Thyroid gland (tissue), 4 donors: ENCODE measurements at regions of chr3 and their contacts with region 1.

Region 1: DNA sequence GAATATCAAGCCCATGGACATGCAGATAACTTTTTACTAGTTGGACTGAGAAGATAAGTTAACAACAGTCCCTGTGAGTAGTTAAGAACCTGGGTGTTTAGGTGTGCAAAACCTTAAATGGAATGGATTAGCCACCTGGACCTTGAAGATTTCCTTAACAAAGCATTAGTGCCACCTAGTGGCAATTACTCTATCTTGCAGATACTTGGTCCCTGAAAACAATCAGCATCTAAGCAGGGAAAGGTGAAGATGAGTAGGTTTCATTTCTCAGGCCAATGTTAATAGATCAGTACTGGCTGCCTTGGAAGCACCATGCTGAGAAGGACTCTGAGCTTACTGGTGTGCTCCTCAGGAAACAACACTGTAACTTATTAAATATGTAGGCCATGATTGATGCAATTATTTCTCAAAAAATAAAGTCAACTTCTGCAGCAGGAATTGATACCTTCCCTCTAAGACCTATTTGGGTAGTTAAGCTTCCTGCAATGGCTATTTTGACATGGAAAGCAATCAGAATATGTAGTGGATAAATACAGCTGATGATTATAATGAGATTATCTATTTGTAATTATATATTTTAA is 329.4 kb downstream of the TBC1D5 start:
- DNase-seq: no peak
- H3K4me3 ChIP-seq: no peak overlapping the region
- H3K27ac ChIP-seq: no peak overlapping the region
- H3K4me1 ChIP-seq: no peaks in the 10 kb centered on the region
- H3K27me3 ChIP-seq: no peaks in the 10 kb centered on the region
- CTCF ChIP-seq: peak; percentile 57 to 78 (median 73)
- POLR2A ChIP-seq: no peak

Region 2: DNA sequence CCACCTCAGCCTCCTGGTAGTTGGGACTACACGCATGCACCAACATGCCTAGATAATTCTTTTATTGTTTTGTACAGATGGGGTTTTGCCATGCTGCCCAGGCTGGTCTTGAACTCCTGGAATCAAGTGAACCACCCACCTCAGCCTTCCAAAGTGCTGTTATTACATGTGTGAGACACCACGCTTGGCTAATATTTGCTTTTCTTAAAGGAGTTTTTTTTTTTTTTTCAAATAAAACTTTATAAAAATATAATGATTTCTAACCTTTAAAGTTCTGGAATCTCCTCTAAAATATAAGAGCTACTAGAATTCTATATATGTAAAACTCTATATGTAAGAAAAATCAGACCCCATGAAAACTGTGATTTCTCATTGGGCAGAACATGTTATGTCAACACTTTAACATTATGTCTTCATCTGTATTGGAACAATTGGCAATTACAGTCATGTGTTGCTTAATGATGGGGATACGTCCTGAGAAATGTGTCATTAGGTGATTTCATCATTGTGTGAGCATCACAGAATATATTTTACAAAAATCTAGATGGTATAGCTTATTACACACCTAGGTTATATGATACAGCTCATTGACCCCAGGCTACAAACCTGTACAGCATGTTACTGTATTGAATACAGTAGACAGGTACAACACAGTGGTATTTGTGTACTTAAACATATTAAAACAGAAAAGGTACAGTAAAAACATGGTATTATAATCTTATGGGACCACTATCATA is 151.2 kb before region 1 on chr3:
- intact Hi-C with region 1: loop called (anchors 5 kb)
- DNase-seq: no peak
- H3K4me3 ChIP-seq: no peak overlapping the region
- H3K27ac ChIP-seq: no peak overlapping the region
- H3K4me1 ChIP-seq: no peaks in the 10 kb centered on the region
- H3K27me3 ChIP-seq: no peaks in the 10 kb centered on the region
- CTCF ChIP-seq: no peak
- POLR2A ChIP-seq: no peak

Region 3: DNA sequence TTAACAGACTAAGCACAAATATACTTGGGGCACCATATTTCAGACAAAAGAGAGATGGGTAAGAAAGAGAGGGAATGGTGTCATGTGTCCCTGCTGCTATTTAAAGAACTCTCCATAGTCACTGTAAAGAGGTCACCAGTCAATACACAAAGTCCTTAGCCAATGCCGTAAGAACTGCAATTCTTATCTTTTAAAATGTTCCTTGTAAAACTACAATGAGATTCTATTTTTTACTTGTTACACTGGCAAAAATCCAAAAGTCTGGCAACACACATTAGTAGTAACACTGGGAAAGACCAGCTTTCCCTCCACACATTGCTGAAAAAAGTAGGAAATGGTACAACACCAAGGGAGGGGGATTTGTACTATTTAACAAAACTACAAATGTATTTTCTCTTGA is 140.0 kb after region 1 on chr3:
- intact Hi-C with region 1: no loop called
- DNase-seq: no peak
- H3K4me3 ChIP-seq: no peak overlapping the region
- H3K27ac ChIP-seq: no peak overlapping the region
- H3K4me1 ChIP-seq: peaks cover 0 to 8% of the 10 kb centered on the region in 2 donors
- H3K27me3 ChIP-seq: no peaks in the 10 kb centered on the region
- CTCF ChIP-seq: no peak
- POLR2A ChIP-seq: no peak